ENCODE measurements at regions of chr1 and their contacts with region 1.

Region 1: GRCh38 chr1:209674957-209675564 is at the start of gene G0S2:
- DNase-seq: peak in 3 of 4 experiments; percentile 29 to 64 (median 32)
- ATAC-seq: peak; percentile 86
- H3K4me3 ChIP-seq: peak within 1 kb of the TSS; percentile 45
- H3K27ac ChIP-seq: peak within 1 kb of the TSS; percentile 48; the same call in 2 of the 3 replicates
- H3K4me1 ChIP-seq: peaks cover 12 to 23% of the 10 kb centered on the region in 2 experiments
- H3K27me3 ChIP-seq: peaks cover 0 to 15% of the 10 kb centered on the region in 2 experiments; a peak in 2 of 5 replicates
- CTCF ChIP-seq: no peak
- EP300 ChIP-seq: peak; percentile 72
- POLR2A ChIP-seq: no peak
- RAD21 ChIP-seq: no peak
- polyA plus RNA-seq, gene G0S2: 4.9 to 8.9 TPM

Region 2: GRCh38 chr1:209651148-209651547 is 23.9 kb before region 1 on chr1:
- CTCF ChIA-PET with region 1: no interaction called
- POLR2A ChIA-PET with region 1: interaction called, 8 read pairs
- in situ Hi-C with region 1: no loop called
- intact Hi-C with region 1: loop called (anchors 2 kb)
- DNase-seq: peak; percentile 69 to 83 (median 75)
- ATAC-seq: peak; percentile 83
- H3K4me3 ChIP-seq: no peak overlapping the region
- H3K27ac ChIP-seq: peak overlapping the region; percentile 36; the same call in 1 of the 3 replicates
- H3K4me1 ChIP-seq: peaks cover 47 to 69% of the 10 kb centered on the region in 2 experiments
- H3K27me3 ChIP-seq: peaks cover 0 to 4% of the 10 kb centered on the region in 2 experiments; a peak in 1 of 5 replicates
- CTCF ChIP-seq: no peak
- EP300 ChIP-seq: no peak
- POLR2A ChIP-seq: no peak
- RAD21 ChIP-seq: no peak